Tibial artery (tissue), 4 donors: ENCODE measurements at regions of chr5 and their contacts with region 1.

Region 1: GRCh38 chr5:96101358-96102089 is 139.9 kb upstream of the ELL2 start:
- DNase-seq: no peak
- H3K4me3 ChIP-seq: no peak overlapping the region
- H3K27ac ChIP-seq: no peak overlapping the region
- H3K4me1 ChIP-seq: no peaks in the 10 kb centered on the region
- H3K27me3 ChIP-seq: no peaks in the 10 kb centered on the region
- CTCF ChIP-seq: no peak

Region 2: DNA sequence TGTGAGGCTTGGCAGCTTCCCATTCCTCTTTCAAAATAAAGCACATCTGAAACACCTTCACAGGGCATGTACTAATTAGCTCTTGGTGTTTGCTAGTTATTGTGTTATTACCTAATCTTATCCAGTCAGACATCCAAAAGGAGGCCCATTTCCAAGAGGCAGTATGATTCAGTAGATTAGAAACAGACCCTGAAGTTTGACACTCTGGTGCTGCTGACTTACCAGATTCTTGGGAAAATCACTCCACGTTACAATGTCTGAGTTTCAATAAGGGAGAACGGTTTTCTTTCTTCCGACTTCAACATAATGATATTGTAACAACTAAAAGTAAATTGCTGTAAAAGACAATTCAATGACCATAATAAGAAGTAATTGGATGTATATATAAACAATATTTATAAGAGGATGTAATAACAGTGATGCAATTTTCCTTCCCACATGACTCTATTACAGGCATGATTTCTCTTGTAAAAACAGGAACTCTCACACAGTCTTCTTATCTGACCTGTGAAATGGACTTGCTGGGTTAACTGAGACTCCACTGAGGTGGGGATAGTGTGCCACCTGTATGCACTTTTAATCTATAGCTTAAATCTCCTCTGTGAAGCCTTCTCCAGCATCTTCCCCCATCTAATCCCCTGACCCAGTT is 41.4 kb after region 1 on chr5:
- intact Hi-C with region 1: loop called (anchors 2 kb)
- DNase-seq: no peak
- H3K4me3 ChIP-seq: no peak overlapping the region
- H3K27ac ChIP-seq: no peak overlapping the region
- H3K4me1 ChIP-seq: peaks cover 0 to 24% (median 4%) of the 10 kb centered on the region in 4 donors
- H3K27me3 ChIP-seq: no peaks in the 10 kb centered on the region
- CTCF ChIP-seq: no peak